ENCODE measurements at regions of chr5 and their contacts with region 1.

Region 1: GRCh38 chr5:132007399-132008165 is 3.9 kb downstream of the ACSL6 start:
- DNase-seq: peak; percentile 93
- H3K4me3 Mint-ChIP-seq: peak overlapping the region; percentile 45
- H3K27ac Mint-ChIP-seq: peak overlapping the region; percentile 71
- H3K4me1 Mint-ChIP-seq: peaks cover 39% of the 10 kb centered on the region
- H3K27me3 Mint-ChIP-seq: peaks cover 37% of the 10 kb centered on the region

Region 2: DNA sequence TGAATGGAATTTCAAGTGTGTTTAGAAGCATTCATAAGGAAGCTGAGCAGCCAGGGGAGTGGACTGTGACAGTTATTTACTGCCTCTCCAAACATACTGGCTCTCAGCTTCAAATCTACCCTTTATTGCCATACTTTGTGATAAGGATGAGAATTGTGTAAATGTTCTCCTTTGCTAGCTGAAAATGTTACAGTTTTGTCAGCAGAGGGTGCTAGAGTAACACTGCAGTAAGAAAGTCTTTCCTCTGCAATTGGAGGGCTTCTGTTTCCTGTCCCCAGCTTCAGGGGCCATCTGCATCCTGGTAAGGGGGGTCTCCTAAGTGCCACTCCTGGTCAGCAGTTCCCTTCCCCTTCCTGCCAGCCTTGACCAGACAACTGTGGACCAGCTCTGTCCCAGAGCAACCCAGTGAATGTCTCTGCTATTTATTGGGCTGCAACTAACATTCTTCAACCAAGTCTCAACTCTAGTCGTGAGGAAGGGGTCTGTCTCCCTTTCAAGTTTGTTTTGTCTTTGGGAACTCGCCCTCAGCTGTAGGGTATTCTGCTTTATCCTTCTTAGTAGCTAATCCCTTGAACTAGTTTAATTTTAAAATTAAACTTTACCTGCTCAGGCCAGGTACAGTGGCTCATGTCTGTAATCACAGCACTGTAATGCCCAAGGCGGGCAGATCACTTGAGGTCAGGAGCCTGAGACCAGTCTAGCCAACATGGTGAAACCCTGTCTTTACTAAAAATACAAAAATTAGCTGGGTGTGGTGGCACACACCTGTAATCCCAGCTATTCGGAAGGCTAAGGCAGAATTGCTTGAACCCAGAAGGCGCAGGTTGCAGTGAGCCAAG is 417.9 kb before region 1 on chr5:
- intact Hi-C with region 1: loop called (anchors 1 kb)
- DNase-seq: peak; percentile 77
- H3K4me3 Mint-ChIP-seq: no peak overlapping the region
- H3K27ac Mint-ChIP-seq: no peak overlapping the region
- H3K4me1 Mint-ChIP-seq: peaks cover 31% of the 10 kb centered on the region
- H3K27me3 Mint-ChIP-seq: no peaks in the 10 kb centered on the region

Region 3: DNA sequence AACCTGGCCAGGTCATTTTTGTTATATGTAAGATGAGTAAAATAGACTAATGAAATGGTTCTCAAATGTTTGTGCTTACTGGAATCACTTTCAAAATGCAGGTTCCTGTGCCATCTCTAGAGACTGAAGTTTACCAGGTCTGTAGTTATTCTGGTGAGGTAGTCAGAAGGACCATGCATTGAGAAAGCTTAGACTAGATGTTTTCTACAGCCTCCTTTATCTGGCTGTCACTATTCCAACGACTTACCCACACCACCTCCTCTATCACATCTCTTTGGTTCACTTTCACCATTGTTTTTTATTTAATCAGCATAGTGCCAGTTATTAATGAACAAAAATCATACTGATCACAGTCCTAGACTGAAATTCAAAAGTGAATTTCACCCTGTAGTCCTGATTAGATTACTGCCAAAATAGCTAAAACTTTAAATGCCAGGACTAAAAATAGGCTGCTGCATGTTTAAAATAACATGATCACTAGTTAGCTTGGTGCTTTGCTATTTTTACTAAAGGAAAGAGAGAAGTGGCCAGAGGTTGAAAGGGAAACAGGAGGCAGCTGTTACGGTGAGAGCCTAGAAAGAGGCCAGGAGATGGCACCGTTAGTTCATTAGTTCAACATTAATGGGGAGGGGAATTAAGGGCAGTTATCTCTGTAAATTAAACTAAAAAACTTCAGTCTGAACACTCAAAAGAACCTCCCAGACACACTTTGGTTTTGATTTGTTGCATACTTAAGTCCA is 196.9 kb before region 1 on chr5:
- intact Hi-C with region 1: loop called (anchors 1 kb)
- DNase-seq: peak; percentile 65
- H3K4me3 Mint-ChIP-seq: no peak overlapping the region
- H3K27ac Mint-ChIP-seq: no peak overlapping the region
- H3K4me1 Mint-ChIP-seq: no peaks in the 10 kb centered on the region
- H3K27me3 Mint-ChIP-seq: peaks cover 17% of the 10 kb centered on the region

Region 4: DNA sequence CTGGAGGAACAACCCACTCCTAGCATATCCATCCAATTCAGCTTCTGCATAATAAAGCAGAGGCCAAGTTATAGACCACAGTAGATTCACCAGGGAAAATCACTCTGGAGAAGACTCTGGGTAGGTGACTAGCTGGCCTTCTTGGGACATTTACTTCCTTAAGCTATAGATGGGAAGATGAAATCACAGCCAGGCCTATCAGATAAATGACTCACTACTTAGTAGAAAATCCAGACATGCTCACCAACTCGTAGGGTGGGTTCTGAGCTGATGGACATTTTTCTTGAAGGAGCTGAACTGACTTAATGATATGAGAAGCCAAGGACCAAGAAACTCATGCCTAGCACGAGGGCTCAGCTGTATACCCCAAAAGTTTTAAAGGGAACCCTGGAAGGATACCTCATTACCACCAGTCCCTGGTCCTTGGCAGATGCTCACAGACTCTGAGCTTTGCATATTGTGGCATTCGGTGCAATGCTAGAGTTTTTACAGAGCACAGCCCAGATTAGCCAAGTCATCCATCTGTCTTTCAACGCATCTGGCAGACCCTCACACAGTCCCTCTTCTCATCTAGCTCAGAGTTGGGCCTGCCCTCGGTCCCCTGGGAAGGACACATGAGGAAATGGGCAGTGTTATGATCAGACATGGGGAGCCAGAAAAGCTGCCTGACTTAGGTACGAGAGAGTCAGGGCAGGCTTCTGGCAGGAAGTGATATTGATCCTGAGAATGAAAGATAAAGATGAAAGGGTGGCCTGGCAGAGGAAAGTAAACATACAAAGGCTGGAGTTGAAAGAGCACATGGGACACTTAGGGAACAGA is 11.2 kb before region 1 on chr5:
- intact Hi-C with region 1: loop called (anchors 2 kb)
- DNase-seq: no peak
- H3K4me3 Mint-ChIP-seq: no peak overlapping the region
- H3K27ac Mint-ChIP-seq: peak overlapping the region; percentile 23
- H3K4me1 Mint-ChIP-seq: peaks cover 40% of the 10 kb centered on the region
- H3K27me3 Mint-ChIP-seq: peaks cover 3% of the 10 kb centered on the region

Region 5: GRCh38 chr5:132019857-132020555 is 12.4 kb after region 1 on chr5:
- intact Hi-C with region 1: loop called (anchors 1 kb)
- DNase-seq: peak; percentile 95
- H3K4me3 Mint-ChIP-seq: peak overlapping the region; percentile 49
- H3K27ac Mint-ChIP-seq: peak overlapping the region; percentile 87
- H3K4me1 Mint-ChIP-seq: peaks cover 45% of the 10 kb centered on the region
- H3K27me3 Mint-ChIP-seq: peaks cover 41% of the 10 kb centered on the region

Region 6: GRCh38 chr5:132055808-132056609 is 48.4 kb after region 1 on chr5:
- intact Hi-C with region 1: no loop called
- DNase-seq: peak; percentile 78
- H3K4me3 Mint-ChIP-seq: no peak overlapping the region
- H3K27ac Mint-ChIP-seq: peak overlapping the region; percentile 79
- H3K4me1 Mint-ChIP-seq: peaks cover 51% of the 10 kb centered on the region
- H3K27me3 Mint-ChIP-seq: peaks cover 19% of the 10 kb centered on the region

Measured in activated CD4-positive, alpha-beta T cell treated with anti-CD3 and anti-CD28 coated beads, Interleukin-2, amount 10 ng/mL, durations not matched to agents 24 days and 14 days (primary cell).